ENCODE measurements at regions of chr19 and their contacts with region 1.

Region 1: DNA sequence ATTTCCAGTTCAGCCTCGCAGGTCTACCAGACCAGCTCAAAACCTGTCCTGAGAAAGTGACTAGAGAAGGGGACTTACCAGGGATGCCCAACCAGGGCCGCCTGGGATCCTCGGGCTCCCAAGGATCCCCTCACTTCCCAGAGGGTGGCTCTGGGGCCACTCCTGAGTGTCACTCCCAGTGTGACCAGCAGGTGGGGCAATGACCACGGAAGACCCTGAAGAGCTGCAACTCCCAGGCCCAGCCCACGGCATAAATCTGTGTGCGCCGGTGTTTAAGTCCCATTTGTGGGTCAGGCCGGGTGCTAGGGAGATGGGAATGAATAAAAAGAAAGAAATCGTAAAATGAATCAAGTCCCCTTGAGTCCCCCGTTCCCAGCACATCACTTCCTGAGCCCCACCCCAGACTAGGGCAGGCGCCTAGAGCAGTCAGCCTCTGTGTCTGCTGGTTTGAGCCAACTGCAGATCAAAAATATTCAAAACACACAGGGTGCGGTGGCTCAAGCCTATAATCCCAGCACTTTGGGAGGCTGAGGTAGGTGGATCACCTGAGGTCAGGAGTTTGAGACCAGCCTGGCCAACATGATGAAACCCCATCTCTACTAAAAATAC is 10.7 kb downstream of the PTGIR start:
- DNase-seq: peak; percentile 91
- H3K4me3 Mint-ChIP-seq: no peak overlapping the region
- H3K27ac Mint-ChIP-seq: peak overlapping the region; percentile 78
- H3K4me1 Mint-ChIP-seq: peaks cover 64% of the 10 kb centered on the region
- H3K27me3 Mint-ChIP-seq: no peaks in the 10 kb centered on the region

Region 2: GRCh38 chr19:46495787-46496101 is 118.5 kb before region 1 on chr19 and contains the start of gene PNMA8B:
- CTCF ChIA-PET with region 1: no interaction called
- POLR2A ChIA-PET with region 1: no interaction called
- intact Hi-C with region 1: no loop called
- DNase-seq: peak; percentile 47
- H3K4me3 Mint-ChIP-seq: peak within 1 kb of the TSS; percentile 59
- H3K27ac Mint-ChIP-seq: no peak within 1 kb of the TSS
- H3K4me1 Mint-ChIP-seq: peaks cover 9% of the 10 kb centered on the region
- H3K27me3 Mint-ChIP-seq: peaks cover 38% of the 10 kb centered on the region
- total RNA-seq, gene PNMA8B: 0.05 to 0.07 TPM

Region 3: DNA sequence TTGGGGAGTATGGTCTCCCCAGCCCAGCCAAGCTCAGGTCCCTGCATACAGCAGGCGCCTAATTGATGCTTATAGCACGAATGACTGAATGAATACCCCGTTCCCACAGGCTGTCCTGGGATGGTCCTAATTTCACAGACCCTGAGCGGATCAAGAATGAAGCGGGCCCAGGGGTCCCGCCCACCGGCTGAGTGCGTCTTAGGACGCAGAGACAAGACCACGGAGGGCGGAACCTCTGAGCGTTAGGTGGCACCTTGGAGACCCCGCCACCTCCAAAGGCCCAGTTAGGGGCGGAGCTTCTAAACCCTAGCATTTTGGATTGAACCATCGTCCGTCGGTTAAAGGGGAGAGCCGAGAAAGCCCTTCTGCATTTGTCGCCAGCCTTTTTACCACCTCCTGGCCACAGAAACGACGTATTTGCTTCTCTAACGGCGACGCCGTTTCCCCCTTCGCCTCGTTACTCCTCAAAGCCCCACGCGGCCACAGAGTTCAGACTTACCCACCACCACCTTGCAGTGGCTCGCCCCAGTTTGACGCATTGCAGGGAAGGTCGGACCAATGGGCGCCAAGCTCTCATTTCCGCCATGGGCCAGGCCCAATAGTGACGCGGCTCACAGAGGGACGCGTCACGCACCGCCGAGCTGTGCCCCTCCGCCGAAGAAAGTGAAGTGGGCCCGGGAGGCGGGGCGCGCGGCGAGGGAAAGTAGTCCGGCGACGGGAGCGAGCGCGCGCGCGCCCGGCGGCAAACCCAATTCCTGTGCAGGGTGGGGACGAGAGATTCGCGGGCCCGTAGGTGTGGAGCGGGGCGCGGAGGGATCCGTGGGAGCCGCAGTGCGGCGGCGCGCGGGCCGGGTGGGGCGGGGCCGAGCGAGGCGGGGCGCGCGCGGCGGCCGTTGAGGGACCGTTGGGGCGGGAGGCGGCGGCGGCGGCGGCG is 13.6 kb before region 1 on chr19:
- CTCF ChIA-PET with region 1: interaction called, 37 read pairs
- POLR2A ChIA-PET with region 1: interaction called, 50 read pairs
- intact Hi-C with region 1: loop called (anchors 1 kb)
- DNase-seq: peak; percentile 97
- H3K4me3 Mint-ChIP-seq: peak overlapping the region; percentile 95
- H3K27ac Mint-ChIP-seq: peak overlapping the region; percentile 100
- H3K4me1 Mint-ChIP-seq: peaks cover 26% of the 10 kb centered on the region
- H3K27me3 Mint-ChIP-seq: no peaks in the 10 kb centered on the region

Region 4: GRCh38 chr19:46624958-46625661 is 10.9 kb after region 1 on chr19 and contains the start of gene PTGIR:
- CTCF ChIA-PET with region 1: interaction called, 28 read pairs
- POLR2A ChIA-PET with region 1: interaction called, 4 read pairs
- intact Hi-C with region 1: no loop called
- DNase-seq: peak; percentile 75
- H3K4me3 Mint-ChIP-seq: peak within 1 kb of the TSS; percentile 76
- H3K27ac Mint-ChIP-seq: peak within 1 kb of the TSS; percentile 81
- H3K4me1 Mint-ChIP-seq: peaks cover 36% of the 10 kb centered on the region
- H3K27me3 Mint-ChIP-seq: no peaks in the 10 kb centered on the region
- total RNA-seq, gene PTGIR: 22.6 to 24.6 TPM

Region 5: GRCh38 chr19:46634045-46634655 is 19.9 kb after region 1 on chr19:
- CTCF ChIA-PET with region 1: interaction called, 14 read pairs
- POLR2A ChIA-PET with region 1: no interaction called
- intact Hi-C with region 1: no loop called
- DNase-seq: peak; percentile 99
- H3K4me3 Mint-ChIP-seq: peak overlapping the region; percentile 76
- H3K27ac Mint-ChIP-seq: peak overlapping the region; percentile 40
- H3K4me1 Mint-ChIP-seq: peaks cover 20% of the 10 kb centered on the region
- H3K27me3 Mint-ChIP-seq: no peaks in the 10 kb centered on the region